ENCODE measurements at regions of chr2 and their contacts with region 1.

Region 1: DNA sequence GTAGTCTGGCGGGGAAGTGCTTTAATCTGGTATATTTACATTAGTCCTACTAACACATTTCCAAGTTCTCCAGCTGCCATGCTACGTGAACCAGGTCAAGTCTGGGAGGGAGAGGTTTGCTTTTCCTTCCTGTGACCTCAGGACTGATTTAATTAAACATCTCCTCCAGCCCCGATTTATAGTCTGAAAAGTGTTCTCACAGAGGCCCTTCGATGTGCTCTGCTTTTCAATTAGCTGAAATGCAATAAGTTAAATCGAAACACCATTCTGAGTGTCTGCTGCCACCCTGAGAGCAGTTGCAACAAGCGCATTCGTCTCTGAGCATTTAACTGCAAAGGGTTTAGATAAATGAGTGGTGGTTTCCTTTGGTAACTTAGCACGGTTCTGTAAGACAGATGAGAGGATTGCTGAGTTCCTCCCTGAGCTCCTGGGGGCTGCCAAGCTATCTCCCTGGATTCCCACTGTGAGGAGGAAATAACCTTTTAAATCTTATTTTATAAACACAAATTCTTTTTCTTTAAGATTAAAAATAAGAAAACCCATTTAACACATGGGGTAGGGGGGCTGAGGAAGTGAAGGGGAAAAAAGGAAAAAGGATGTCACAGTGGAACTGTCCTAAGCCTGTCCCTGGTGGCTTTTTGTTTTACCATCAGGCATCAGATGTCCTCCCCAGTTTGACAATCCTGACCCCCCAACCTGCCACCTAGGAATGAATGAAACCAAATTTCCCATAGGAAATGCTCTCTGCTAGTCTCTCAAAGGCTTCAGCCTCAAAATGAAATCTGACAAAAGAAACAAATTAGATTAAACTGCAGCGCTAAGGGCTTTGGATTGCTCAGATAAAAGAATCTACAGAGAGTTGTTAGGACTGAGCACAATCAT is 56.5 kb upstream of the CREB1 start:
- DNase-seq: peak; percentile 60 to 64
- H3K4me3 ChIP-seq: no peak overlapping the region
- H3K4me1 ChIP-seq: no peaks in the 10 kb centered on the region
- H3K27me3 ChIP-seq: no peaks in the 10 kb centered on the region

Region 2: DNA sequence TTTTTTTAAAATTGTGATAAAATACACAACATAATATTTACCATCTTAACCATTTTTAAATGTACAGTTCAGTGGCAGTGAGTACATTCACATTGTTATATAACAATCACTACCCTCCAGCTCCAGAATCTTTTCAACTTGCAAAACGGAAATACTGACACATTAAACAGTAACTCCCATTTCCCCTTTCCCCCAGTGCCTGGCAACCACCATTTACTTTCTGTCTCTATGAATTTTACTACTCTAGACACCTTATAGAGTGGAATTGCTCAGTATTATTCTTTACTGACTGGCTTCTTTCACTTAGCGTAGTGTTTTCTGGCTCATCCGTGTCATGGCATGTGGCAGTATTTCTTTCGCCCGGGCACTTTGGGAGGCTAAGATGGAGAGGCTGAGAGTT is 675.3 kb before region 1 on chr2:
- in situ Hi-C with region 1: loop called (anchors 5 kb)
- DNase-seq: no peak
- H3K4me3 ChIP-seq: no peak overlapping the region
- H3K4me1 ChIP-seq: peaks cover 10% of the 10 kb centered on the region
- H3K27me3 ChIP-seq: no peaks in the 10 kb centered on the region

Region 3: GRCh38 chr2:206937555-206937954 is 535.7 kb before region 1 on chr2:
- in situ Hi-C with region 1: no loop called
- DNase-seq: no peak
- H3K4me3 ChIP-seq: no peak overlapping the region
- H3K4me1 ChIP-seq: no peaks in the 10 kb centered on the region
- H3K27me3 ChIP-seq: no peaks in the 10 kb centered on the region

Region 4: GRCh38 chr2:206981739-206982340 is 491.4 kb before region 1 on chr2:
- in situ Hi-C with region 1: loop called (anchors 5 kb)
- DNase-seq: peak; percentile 77 to 83
- H3K4me3 ChIP-seq: no peak overlapping the region
- H3K4me1 ChIP-seq: peaks cover 23% of the 10 kb centered on the region
- H3K27me3 ChIP-seq: no peaks in the 10 kb centered on the region

Region 5: DNA sequence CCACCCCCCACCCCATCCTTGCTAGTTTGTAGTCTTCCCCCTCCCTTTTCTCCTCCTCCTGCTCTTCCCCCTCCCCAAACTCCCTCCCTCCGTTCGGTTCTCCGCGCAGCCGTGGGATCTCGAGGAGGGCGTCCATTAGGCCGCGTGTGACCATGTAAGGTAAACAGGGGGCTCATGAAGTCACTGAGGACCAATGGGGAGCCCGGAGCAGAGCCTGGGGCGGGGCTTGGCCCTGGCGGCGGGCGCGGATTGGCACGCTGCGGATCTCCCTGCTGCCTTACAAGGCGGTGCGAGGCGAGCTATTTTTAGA is 307.3 kb before region 1 on chr2:
- in situ Hi-C with region 1: loop called (anchors 25 kb)
- DNase-seq: peak; percentile 98
- H3K4me3 ChIP-seq: peak overlapping the region; percentile 66
- H3K4me1 ChIP-seq: peaks cover 29% of the 10 kb centered on the region
- H3K27me3 ChIP-seq: no peaks in the 10 kb centered on the region

Region 6: GRCh38 chr2:207734264-207734635 is 261.0 kb after region 1 on chr2:
- in situ Hi-C with region 1: no loop called
- DNase-seq: no peak
- H3K4me3 ChIP-seq: no peak overlapping the region
- H3K4me1 ChIP-seq: peaks cover 3% of the 10 kb centered on the region; the same call in 1 of the 2 replicates
- H3K27me3 ChIP-seq: no peaks in the 10 kb centered on the region

Measured in HAP-1 (cell line).